ENCODE measurements at regions of chr5 and their contacts with region 1.

Region 1: DNA sequence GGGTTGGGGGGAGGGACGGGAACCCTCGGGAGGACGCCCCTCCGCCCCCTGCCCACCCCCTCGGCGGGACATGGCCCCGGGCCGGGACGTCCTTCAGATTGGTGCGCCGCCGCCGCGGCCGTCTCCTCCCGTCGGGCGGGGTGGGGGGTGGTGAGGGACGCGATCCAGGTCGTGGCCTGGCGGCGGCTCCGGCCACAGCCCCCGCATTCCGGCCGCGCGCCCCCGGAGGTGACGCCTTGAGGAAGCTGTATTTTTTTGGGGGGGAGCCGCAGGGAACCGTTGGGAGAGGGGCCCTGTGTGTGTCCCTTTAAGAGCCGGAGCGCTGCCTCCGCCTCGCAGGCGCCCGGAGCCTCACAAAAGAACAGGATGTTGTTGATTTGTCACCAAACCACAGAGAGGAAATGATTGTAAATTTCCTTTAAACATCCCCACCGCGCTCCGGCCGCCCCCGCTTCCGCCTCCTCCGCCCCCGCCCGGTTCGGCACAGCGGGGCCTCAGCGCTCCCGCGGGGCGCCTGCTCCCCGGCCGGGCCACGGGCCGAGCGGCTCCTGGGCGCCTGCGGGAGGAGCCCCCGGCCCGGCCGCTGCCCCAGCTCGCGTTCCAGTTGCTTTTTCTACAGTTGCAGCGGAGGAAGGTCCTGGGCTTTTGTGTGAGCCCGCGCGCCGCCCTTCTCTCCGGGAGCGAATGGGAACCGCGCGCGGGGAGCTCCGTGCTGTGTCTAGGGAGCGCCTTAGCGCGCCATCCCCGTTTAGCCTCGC is 32.1 kb upstream of the SPRY4 start:
- DNase-seq: peak; percentile 67 to 95
- H3K4me3 ChIP-seq: peak overlapping the region; percentile 82 to 89
- H3K27ac ChIP-seq: peak overlapping the region; percentile 99 to 100
- H3K4me1 ChIP-seq: peaks cover 8 to 9% of the 10 kb centered on the region in 2 donors
- H3K27me3 ChIP-seq: no peaks in the 10 kb centered on the region
- CTCF ChIP-seq: peak in 1 of 3 experiments; percentile 14

Region 2: GRCh38 chr5:142542906-142543305 is 186.0 kb after region 1 on chr5:
- intact Hi-C with region 1: loop called (anchors 2 kb)
- DNase-seq: peak in 1 of 2 donors; percentile 72
- H3K4me3 ChIP-seq: no peak overlapping the region
- H3K27ac ChIP-seq: peak overlapping the region; percentile 13 to 68
- H3K4me1 ChIP-seq: peaks cover 0 to 27% of the 10 kb centered on the region in 2 donors
- H3K27me3 ChIP-seq: no peaks in the 10 kb centered on the region
- CTCF ChIP-seq: peak in 1 of 3 experiments; percentile 22

Measured in ascending aorta (tissue), 2 donors.